ENCODE measurements at regions of chr4 and their contacts with region 1.

Region 1: DNA sequence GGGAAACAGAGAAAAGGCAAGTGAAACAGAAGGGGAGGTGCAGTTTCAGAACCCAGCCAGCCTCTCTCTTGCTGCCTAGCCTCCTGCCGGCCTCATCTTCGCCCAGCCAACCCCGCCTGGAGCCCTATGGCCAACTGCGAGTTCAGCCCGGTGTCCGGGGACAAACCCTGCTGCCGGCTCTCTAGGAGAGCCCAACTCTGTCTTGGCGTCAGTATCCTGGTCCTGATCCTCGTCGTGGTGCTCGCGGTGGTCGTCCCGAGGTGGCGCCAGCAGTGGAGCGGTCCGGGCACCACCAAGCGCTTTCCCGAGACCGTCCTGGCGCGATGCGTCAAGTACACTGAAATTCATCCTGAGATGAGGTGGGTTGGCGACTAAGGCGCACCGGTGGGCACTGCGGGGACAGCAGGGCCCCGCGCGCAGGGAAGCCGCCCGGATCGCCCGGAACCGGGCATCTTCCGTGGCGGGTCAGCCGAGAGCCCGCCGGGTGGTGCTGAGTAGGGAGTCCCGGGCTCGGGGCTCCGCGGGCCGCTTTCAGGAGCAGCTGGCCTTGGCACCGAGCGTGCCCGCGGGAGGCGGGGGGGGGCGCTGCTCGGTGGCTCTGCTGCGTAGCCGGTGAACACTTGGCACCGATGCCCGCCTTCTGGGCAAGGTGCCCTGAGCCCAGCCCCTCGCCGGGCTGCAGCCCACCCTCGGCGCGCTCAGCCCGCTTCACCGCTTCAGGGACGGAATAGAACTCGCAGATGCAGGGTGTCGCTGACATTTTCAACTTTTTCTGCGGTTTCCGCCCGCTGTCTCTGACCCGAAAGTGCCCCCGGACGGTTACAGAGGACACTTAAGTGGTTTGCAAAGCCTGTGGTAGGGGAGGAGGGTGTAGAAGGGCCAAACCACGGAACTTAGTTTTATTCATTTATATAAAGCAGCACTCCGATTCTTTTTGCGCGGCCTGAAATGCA is at the start of gene CD38:
- DNase-seq: peak; percentile 76
- ATAC-seq: peak; percentile 86
- H3K4me3 Mint-ChIP-seq: peak within 1 kb of the TSS; percentile 92
- H3K27ac Mint-ChIP-seq: peak within 1 kb of the TSS; percentile 92
- H3K4me1 Mint-ChIP-seq: peaks cover 72% of the 10 kb centered on the region
- H3K27me3 Mint-ChIP-seq: no peaks in the 10 kb centered on the region
- total RNA-seq, gene CD38: 99.9 to 110 TPM

Region 2: DNA sequence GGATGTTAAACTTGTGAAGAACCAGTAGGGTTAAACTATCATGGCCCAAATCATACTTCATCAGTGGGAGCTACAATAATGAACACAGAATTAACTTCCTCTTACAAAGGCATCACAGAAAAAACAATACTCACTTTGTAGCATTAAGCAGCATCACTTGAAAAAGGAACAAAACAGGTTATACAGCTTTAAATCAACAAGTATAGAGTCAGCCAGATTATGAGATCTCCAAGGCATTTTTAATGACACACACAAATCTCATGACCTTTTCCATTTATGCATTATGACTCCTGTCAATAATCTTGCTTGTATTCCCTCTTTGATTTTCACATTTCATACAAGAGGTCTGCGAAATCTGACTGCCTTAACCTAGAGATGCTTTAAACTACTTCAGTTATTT is 141.7 kb before region 1 on chr4:
- POLR2A ChIA-PET with region 1: no interaction called
- DNase-seq: no peak
- ATAC-seq: no peak
- H3K4me3 Mint-ChIP-seq: no peak overlapping the region
- H3K27ac Mint-ChIP-seq: no peak overlapping the region
- H3K4me1 Mint-ChIP-seq: peaks cover 4% of the 10 kb centered on the region
- H3K27me3 Mint-ChIP-seq: no peaks in the 10 kb centered on the region

Region 3: DNA sequence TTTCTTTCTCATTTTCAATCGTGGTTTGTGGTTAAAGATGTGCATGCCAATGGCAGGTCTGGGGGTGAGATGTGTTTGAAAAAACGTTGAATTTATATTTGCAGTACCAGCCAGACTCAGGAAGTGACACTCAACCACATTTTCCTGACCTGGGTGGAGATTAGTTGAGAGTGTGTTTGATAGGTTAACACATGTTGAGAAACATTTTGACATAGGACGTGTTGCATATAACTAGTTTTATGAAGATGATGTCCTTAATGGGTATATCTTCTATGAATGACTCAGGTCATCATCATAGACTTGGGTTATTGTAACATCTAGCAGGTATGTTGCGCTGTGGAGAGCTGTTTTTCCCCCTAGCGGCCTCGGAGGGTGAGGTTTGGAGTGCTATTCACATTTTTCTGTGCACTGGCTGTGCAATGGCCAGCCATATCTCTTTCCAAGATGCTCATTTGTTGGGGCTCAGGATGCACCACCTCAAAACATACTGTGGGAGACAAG is 22.2 kb before region 1 on chr4:
- POLR2A ChIA-PET with region 1: interaction called, 52 read pairs
- DNase-seq: peak; percentile 67
- ATAC-seq: peak; percentile 78
- H3K4me3 Mint-ChIP-seq: peak overlapping the region; percentile 80
- H3K27ac Mint-ChIP-seq: peak overlapping the region; percentile 87
- H3K4me1 Mint-ChIP-seq: peaks cover 45% of the 10 kb centered on the region
- H3K27me3 Mint-ChIP-seq: no peaks in the 10 kb centered on the region

Region 4: GRCh38 chr4:15765910-15766697 is 12.5 kb before region 1 on chr4:
- POLR2A ChIA-PET with region 1: interaction called, 27 read pairs
- DNase-seq: no peak
- ATAC-seq: peak; percentile 76
- H3K4me3 Mint-ChIP-seq: peak overlapping the region; percentile 54
- H3K27ac Mint-ChIP-seq: peak overlapping the region; percentile 92
- H3K4me1 Mint-ChIP-seq: peaks cover 53% of the 10 kb centered on the region
- H3K27me3 Mint-ChIP-seq: no peaks in the 10 kb centered on the region

Measured in activated naive CD8-positive, alpha-beta T cell treated with anti-CD3 and anti-CD28 coated beads, Interleukin-2, amount 10 ng/mL, durations not matched to agents 7 days and 5 days (primary cell).